B cell (primary cell): ENCODE measurements at regions of chr2 and their contacts with region 1.

Region 1: DNA sequence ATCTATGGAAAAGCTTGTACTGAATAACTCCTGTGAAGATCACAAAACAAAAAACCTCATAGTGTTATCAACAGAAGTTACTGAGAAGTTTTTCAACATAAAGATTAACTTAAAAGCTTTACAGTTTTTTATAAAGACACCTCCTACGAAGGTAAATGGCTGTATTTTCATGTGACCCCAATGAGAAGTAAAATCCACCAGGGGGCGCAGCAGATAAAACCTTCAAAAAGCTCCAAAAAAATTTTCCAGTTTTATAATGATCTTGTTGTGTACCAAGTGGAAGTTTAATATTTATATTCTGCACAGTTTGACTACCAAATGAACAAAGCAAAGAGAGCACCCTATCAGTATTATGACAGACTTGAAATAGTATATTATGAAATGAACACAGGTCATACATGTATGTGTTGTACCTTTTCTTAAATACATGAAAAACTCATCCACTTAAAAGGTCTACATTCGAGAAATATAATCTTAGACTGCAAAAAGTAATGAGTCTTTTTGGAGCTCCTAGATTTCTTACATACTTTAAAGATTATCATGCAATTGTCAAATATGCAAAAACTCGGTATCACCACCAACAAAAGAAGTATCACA is 38.5 kb downstream of the PNO1 start:
- DNase-seq: peak; percentile 66
- ATAC-seq: peak; percentile 41
- H3K4me3 ChIP-seq: no peak overlapping the region
- H3K4me3 Mint-ChIP-seq: no peak overlapping the region
- H3K27ac ChIP-seq: peak overlapping the region in 1 of 2 donors; percentile 39
- H3K27ac Mint-ChIP-seq: no peak overlapping the region
- H3K4me1 ChIP-seq: peaks cover 3 to 24% of the 10 kb centered on the region in 2 donors
- H3K4me1 Mint-ChIP-seq: peaks cover 56% of the 10 kb centered on the region
- H3K27me3 ChIP-seq: no peaks in the 10 kb centered on the region
- H3K27me3 Mint-ChIP-seq: no peaks in the 10 kb centered on the region
- CTCF ChIP-seq: peak; percentile 95

Region 2: DNA sequence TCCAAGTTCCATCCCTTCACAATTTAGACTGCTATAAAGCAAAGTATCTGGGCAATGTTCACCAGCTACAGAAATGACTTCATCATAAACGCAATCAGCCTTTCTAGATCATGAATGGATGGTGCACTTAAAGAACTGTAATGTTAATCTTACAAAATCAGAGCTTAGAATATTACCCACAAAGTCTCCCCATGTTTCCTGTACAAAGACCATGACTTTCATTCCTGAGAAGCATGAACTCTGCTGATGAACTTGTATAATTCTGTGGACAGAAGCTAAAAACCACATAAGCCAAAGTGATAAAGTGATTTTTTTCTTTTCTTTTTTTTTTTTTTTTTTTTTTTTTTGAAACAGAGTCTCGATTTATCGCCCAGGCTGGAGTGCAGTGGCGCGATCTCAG is 186.7 kb before region 1 on chr2:
- CTCF ChIA-PET with region 1: no interaction called
- POLR2A ChIA-PET with region 1: no interaction called
- intact Hi-C with region 1: no loop called
- DNase-seq: no peak
- ATAC-seq: no peak
- H3K4me3 ChIP-seq: no peak overlapping the region
- H3K4me3 Mint-ChIP-seq: no peak overlapping the region
- H3K27ac ChIP-seq: no peak overlapping the region
- H3K27ac Mint-ChIP-seq: no peak overlapping the region
- H3K4me1 ChIP-seq: no peaks in the 10 kb centered on the region
- H3K4me1 Mint-ChIP-seq: no peaks in the 10 kb centered on the region
- H3K27me3 ChIP-seq: peaks cover 0 to 3% (median 1%) of the 10 kb centered on the region in 4 experiments
- H3K27me3 Mint-ChIP-seq: peaks cover 20% of the 10 kb centered on the region
- CTCF ChIP-seq: no peak

Region 3: DNA sequence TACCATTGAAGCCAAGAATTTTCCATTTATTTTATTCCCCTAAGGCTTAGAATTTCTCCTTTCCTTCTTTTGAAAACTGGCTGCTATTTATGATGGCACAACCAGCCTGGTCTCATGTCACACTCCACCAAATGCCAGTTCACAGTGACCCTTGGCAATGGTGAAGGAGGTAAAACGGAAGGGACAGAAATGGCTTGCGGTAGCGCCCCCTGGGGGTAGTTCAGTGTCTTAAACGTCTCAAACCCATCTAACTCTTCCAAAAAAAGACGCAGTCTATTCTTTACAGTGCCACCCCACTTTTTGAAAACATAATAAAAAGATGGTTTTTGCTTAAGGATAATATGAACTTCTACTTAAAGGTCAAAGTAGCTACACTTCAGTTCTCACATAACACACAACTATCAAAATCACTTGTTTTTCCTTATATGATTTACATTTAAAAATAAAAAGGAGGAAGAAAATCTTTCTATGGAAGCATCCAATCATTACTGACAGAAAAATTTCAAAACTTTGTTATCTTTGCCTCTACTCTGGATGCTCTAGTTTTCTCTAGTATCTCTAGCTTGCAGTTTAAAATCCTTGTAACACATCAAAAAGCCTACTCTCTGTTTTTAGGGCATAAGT is 10.6 kb before region 1 on chr2:
- CTCF ChIA-PET with region 1: interaction called, 44 read pairs
- POLR2A ChIA-PET with region 1: no interaction called
- intact Hi-C with region 1: no loop called
- DNase-seq: peak; percentile 76
- ATAC-seq: peak; percentile 61
- H3K4me3 ChIP-seq: no peak overlapping the region
- H3K4me3 Mint-ChIP-seq: no peak overlapping the region
- H3K27ac ChIP-seq: no peak overlapping the region
- H3K27ac Mint-ChIP-seq: no peak overlapping the region
- H3K4me1 ChIP-seq: peaks cover 0 to 5% of the 10 kb centered on the region in 2 donors
- H3K4me1 Mint-ChIP-seq: peaks cover 24% of the 10 kb centered on the region
- H3K27me3 ChIP-seq: no peaks in the 10 kb centered on the region
- H3K27me3 Mint-ChIP-seq: no peaks in the 10 kb centered on the region
- CTCF ChIP-seq: peak; percentile 93

Region 4: DNA sequence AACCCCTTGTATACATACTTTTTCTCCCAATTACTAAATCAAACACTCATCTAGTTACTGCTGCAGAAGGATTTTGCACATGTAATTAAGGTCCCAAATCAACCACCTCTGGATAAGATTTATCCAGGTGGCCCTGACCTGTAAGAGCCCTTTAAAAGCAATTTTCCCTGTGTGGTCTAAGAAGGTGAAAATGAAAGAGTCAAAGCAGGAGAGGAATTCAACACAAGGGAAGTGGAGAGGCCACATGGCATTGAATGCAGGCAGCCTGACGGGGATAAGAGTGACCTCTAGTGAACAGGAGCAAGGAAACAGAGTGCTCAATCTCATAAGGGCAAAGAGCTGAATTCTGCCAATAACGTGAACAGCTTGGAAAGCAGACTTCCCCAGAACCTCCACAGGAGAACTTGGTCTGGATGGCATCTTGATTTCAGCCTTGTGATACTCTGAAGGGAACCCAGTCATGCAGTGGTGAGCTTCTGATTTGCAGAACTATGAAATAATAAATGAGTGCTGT is 29.0 kb after region 1 on chr2:
- CTCF ChIA-PET with region 1: interaction called, 46 read pairs
- POLR2A ChIA-PET with region 1: no interaction called
- intact Hi-C with region 1: no loop called
- DNase-seq: peak; percentile 45
- ATAC-seq: no peak
- H3K4me3 ChIP-seq: no peak overlapping the region
- H3K4me3 Mint-ChIP-seq: peak overlapping the region; percentile 5
- H3K27ac ChIP-seq: peak overlapping the region in 1 of 2 donors; percentile 58
- H3K27ac Mint-ChIP-seq: no peak overlapping the region
- H3K4me1 ChIP-seq: peaks cover 13 to 48% of the 10 kb centered on the region in 2 donors
- H3K4me1 Mint-ChIP-seq: peaks cover 86% of the 10 kb centered on the region
- H3K27me3 ChIP-seq: no peaks in the 10 kb centered on the region
- H3K27me3 Mint-ChIP-seq: no peaks in the 10 kb centered on the region
- CTCF ChIP-seq: no peak

Region 5: DNA sequence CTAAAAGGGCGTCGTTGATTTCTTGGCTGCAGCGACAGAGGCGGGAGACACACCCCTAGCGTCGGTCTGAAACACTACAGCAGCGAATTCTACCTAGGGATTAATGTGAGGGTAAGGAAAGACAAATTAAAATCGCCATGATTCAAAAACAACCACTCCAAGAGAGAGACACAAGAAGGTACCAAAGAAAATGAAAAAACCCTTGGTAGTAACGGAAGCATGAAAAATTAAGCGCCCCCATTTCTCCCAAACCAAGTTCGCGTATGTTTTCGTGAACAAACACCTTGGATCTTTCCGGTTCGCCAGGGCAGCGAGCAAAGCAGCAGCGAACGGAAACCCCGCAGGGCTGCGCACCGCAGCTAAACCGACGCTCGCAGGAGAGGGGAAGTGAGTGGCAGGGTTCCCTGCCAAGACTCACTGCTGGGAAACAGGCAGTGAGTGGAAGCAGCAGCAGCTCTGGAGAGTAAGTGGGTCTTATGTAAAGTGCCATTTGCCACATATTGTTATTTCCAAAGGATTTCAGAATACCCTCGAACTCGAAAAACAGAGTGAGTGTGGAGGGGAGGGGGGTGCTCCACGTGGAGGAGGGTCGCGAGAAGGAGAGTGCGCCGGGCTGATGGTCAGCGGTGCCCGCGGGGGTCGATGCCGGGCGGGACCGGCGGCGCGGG is 55.1 kb after region 1 on chr2:
- CTCF ChIA-PET with region 1: interaction called, 26 read pairs
- POLR2A ChIA-PET with region 1: interaction called, 5 read pairs
- intact Hi-C with region 1: loop called (anchors 1 kb)
- DNase-seq: peak; percentile 92
- ATAC-seq: peak; percentile 60
- H3K4me3 ChIP-seq: peak overlapping the region; percentile 76 to 97 (median 96)
- H3K4me3 Mint-ChIP-seq: peak overlapping the region; percentile 90
- H3K27ac ChIP-seq: peak overlapping the region; percentile 86 to 92
- H3K27ac Mint-ChIP-seq: peak overlapping the region; percentile 93
- H3K4me1 ChIP-seq: peaks cover 39 to 55% of the 10 kb centered on the region in 2 donors
- H3K4me1 Mint-ChIP-seq: peaks cover 36% of the 10 kb centered on the region
- H3K27me3 ChIP-seq: no peaks in the 10 kb centered on the region
- H3K27me3 Mint-ChIP-seq: no peaks in the 10 kb centered on the region
- CTCF ChIP-seq: peak; percentile 77

Region 6: DNA sequence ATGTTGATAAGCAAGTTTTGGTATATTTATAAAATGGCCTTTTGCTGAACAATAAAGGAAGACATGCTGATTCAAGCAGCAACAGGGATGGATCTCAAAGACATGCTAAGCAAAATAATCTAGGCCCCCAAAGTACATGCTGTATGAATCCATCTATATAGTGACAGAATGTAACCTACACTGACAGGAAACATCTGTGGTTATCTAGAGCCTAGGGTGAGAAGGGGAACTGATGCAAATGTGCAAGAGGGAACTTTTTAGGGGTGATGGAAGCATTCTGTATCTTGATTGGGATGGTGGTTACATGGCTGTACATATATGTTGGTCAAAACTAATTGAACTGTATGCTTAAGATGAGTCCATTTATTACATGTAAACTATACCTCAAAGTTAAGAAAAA is 99.3 kb after region 1 on chr2:
- CTCF ChIA-PET with region 1: interaction called, 17 read pairs
- POLR2A ChIA-PET with region 1: no interaction called
- intact Hi-C with region 1: no loop called
- DNase-seq: peak; percentile 47
- ATAC-seq: no peak
- H3K4me3 ChIP-seq: no peak overlapping the region
- H3K4me3 Mint-ChIP-seq: no peak overlapping the region
- H3K27ac ChIP-seq: no peak overlapping the region
- H3K27ac Mint-ChIP-seq: no peak overlapping the region
- H3K4me1 ChIP-seq: peaks cover 11 to 12% of the 10 kb centered on the region in 2 donors
- H3K4me1 Mint-ChIP-seq: peaks cover 15% of the 10 kb centered on the region
- H3K27me3 ChIP-seq: no peaks in the 10 kb centered on the region
- H3K27me3 Mint-ChIP-seq: no peaks in the 10 kb centered on the region
- CTCF ChIP-seq: no peak